ENCODE measurements at regions of chr19 and their contacts with region 1.

Region 1: GRCh38 chr19:6238643-6239281 is 41.0 kb downstream of the MLLT1 start:
- DNase-seq: peak; percentile 75
- H3K4me3 ChIP-seq: no peak overlapping the region
- CTCF ChIP-seq: no peak

Region 2: GRCh38 chr19:6279931-6280591 is 41.3 kb after region 1 on chr19 and contains the start of gene MLLT1:
- in situ Hi-C with region 1: loop called (anchors 5 kb)
- DNase-seq: peak; percentile 88
- H3K4me3 ChIP-seq: peak within 1 kb of the TSS; percentile 93
- CTCF ChIP-seq: peak; percentile 44